ENCODE measurements at regions of chr10 and their contacts with region 1.

Region 1: GRCh38 chr10:73252445-73253224 is at the start of gene MRPS16:
- DNase-seq: peak; percentile 89 to 98 (median 95)

Region 2: DNA sequence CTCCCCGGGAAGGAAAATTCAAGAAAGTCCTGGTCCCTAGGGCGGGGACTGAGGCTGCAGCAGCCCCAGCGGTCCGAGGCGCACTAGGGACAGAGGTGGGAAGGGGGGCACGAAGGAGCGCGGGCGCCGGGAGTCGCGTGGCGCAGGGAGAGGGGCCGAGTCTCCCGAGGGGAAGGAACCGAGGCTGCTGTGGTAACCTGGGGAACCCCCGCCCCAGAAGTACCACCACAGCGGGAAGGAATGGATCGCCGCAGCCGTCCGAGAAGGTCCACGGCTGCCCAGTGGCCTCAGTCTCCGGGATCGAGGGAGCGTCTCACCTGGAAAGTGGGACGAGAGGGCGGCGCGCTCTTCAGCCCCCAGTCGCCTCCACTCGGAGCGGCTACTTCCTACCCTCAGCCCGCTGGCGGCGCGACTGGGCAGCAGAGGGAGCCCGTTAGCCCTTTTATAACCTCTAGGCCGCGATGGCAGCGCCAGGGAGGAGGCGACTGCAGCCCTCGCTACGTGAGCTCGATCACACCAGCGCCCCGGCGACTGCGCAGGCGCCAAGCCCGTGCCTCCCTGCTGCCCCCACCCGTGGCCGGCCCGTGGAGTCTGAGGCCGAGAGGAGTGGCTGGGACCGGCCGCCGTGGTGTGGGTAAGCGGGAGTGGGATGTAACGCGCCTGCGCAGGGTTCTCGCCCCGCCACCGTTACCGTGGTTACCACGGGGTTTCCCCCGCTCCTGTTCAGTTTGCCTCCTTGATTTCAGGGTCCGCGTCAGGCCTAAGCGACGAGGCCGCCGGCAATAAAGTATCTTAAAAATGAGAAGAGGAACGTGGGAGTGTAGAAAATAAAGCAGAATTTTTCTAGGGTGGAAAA is 156.0 kb before region 1 on chr10 and contains the start of gene P4HA1:
- intact Hi-C with region 1: loop called (anchors 5 kb)
- DNase-seq: peak; percentile 96 to 100 (median 99)

Region 3: DNA sequence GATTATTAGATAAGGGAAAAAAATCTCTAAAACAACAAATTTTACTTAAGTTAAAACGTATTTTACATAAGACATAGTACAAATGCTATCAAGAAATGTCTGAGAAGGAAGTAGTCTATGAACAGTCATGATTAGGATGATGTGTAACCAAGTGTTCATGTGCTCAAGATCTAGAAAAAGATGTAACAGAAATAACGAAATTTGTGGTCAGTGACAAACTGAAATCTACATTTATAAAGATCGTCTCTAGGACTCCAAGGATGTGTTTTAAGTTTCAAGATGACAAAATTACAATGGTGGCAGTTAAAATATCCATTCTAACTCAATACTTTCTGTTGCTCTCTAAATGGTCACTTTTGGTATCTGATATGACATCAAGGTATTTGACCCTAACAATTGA is 226.0 kb after region 1 on chr10:
- intact Hi-C with region 1: no loop called
- DNase-seq: no peak